Panc1 (cell line): ENCODE measurements at regions of chr2 and their contacts with region 1.

Region 1: DNA sequence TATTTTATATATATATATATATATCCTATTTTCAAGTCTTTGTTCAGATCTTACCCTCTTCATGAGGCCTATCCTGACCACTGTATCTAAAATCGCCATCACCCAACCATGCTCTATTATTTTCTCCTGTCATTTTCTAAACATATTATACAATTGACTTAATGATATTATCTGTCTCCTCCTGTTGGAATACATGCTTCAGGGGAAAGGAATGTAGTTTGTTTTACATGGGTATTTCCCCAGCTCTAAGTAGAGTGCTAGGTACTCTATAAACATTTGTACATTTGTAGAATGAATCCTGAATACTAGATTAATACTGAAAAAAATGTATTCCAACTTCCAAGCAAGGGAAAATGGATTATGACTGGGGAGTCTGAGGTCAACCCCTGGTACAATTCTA is 26.2 kb downstream of the TTC21B start:
- DNase-seq: no peak
- ATAC-seq: no peak
- H3K4me3 ChIP-seq: no peak overlapping the region
- H3K27ac ChIP-seq: no peak overlapping the region
- H3K4me1 ChIP-seq: no peaks in the 10 kb centered on the region
- H3K27me3 ChIP-seq: no peaks in the 10 kb centered on the region
- CTCF ChIP-seq: no peak

Region 2: DNA sequence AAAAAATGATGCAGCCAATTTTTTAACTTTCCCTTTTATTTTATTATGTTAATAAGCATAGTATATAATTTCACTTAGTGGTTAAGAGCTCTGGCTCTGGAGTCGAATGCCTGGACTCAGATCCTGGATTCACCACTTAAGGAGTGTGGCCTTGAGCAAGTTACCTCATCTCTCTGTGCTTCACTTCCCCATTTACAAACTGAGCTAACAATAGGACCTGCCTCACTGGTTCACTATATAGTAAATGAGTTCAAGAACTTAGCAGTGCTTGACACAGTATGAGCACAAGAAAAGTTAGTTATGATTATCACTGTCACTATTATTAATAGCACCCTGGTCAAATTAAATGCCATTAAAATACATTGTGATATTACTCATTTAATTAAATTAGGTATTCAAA is 754.1 kb before region 1 on chr2:
- CTCF ChIA-PET with region 1: interaction called, 10 read pairs
- POLR2A ChIA-PET with region 1: no interaction called
- in situ Hi-C with region 1: no loop called
- intact Hi-C with region 1: no loop called
- DNase-seq: no peak
- ATAC-seq: no peak
- H3K4me3 ChIP-seq: no peak overlapping the region
- H3K27ac ChIP-seq: no peak overlapping the region
- H3K4me1 ChIP-seq: no peaks in the 10 kb centered on the region
- H3K27me3 ChIP-seq: no peaks in the 10 kb centered on the region
- CTCF ChIP-seq: no peak